Activated naive CD4-positive, alpha-beta T cell treated with anti-CD3 and anti-CD28 coated beads for 36 hours (primary cell): ENCODE measurements at regions of chr19 and their contacts with region 1.

Region 1: DNA sequence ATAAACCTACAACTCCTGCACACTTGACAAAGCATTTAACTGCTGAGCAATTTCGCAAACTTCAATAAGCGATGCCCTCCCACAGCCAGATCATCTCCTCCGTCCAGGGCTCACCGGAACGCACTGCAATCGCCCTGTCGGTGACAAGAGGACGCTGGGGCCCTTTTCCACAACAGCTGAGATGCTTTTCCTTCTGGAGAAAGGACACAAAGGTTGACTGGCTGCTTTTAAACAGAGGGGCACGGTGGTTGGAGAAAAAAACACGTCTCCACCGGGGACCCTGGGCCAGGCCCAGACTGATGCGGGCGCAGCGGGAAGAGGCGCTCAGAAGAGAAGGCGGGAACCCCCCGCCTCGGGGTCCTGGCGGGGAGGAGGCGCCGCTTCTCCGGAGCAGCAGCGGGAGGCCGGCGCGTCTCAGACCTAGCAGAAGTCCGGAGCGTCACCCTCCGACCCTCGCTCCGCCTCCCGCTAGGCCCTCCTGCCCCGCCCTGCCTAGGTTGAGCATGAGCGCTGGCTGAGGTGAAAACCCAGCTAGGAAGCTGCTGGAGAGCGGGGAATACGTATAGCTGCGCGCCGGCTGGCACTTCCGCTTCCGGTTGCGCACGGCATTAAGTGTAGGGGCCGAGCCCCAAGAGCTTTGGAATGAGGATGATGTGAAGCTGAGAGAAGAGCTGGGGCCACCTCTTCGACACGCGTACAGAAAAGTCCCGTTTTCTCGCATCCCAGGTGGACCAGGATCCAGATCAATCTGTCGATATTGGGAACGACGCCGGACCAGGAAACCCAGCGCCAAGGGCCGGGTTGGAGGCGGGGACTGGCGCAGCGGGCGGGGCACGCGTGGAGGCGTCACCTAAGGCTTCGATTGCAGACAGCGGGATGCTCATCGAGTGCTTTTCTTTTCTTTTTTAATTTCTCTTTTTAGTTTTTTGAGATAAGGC is at the start of gene ZNF846:
- DNase-seq: peak; percentile 96
- H3K4me3 Mint-ChIP-seq: peak within 1 kb of the TSS; percentile 98
- H3K27ac Mint-ChIP-seq: peak within 1 kb of the TSS; percentile 98
- H3K4me1 Mint-ChIP-seq: peaks cover 5% of the 10 kb centered on the region
- H3K27me3 Mint-ChIP-seq: no peaks in the 10 kb centered on the region
- total RNA-seq, gene ZNF846: 2.0 to 3.5 TPM

Region 2: GRCh38 chr19:9621156-9622037 is 147.0 kb before region 1 on chr19 and contains the start of gene ZNF561:
- CTCF ChIA-PET with region 1: interaction called, 3 read pairs
- intact Hi-C with region 1: loop called (anchors 1 kb)
- DNase-seq: peak; percentile 90
- H3K4me3 Mint-ChIP-seq: peak within 1 kb of the TSS; percentile 98
- H3K27ac Mint-ChIP-seq: peak within 1 kb of the TSS; percentile 99
- H3K4me1 Mint-ChIP-seq: peaks cover 18% of the 10 kb centered on the region
- H3K27me3 Mint-ChIP-seq: no peaks in the 10 kb centered on the region
- total RNA-seq, gene ZNF561: 28.7 to 29.4 TPM

Region 3: DNA sequence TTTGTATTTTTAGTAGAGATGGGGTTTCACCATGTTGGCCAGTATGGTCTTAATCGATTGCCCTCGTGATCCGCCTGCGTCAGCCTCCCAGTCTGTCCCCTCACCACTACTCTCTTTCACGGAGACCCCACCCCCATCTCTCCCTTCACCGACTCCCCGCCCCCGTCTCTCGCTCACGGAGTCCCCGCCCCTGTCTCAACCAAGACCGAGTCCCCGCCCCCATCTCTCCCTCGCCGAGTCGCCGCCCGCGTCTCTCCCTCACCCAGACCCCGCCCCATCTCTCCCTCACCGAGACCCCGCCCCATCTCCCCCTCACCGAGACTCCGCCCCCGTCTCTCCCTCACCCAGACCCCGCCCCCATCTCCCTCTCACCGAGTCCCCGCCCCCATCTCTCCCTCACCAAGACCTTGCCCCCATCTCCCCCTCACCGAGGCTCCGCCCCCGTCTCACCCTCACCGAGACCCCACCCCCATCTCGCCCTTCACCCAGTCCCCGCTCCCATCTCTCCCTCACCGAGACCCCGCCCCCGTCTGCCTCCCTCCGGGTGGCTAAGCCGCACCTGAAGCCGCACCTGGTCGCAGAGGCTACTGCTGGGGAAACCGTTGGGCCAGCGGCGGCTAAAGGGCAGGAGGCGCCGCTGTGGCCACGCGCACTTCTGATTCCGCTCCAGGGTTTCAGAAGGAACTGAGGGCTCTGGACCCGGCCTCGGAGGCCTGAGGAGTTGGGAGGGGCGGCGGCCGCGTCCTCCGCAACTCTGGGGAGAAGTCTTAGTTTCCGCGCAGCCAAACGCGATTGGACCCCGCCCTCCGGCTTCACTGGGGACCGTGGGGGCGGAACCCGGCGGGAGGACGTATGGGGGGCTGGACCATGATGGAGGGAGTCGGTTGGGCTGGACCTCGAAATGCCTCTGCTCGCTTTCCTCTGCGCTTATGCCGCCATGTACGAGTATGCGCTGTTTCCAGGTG is 17.2 kb after region 1 on chr19:
- CTCF ChIA-PET with region 1: no interaction called
- intact Hi-C with region 1: loop called (anchors 1 kb)
- DNase-seq: peak; percentile 100
- H3K4me3 Mint-ChIP-seq: peak overlapping the region; percentile 93
- H3K27ac Mint-ChIP-seq: peak overlapping the region; percentile 94
- H3K4me1 Mint-ChIP-seq: peaks cover 25% of the 10 kb centered on the region
- H3K27me3 Mint-ChIP-seq: no peaks in the 10 kb centered on the region

Region 4: GRCh38 chr19:9808855-9809824 is 40.7 kb after region 1 on chr19:
- CTCF ChIA-PET with region 1: no interaction called
- intact Hi-C with region 1: no loop called
- DNase-seq: no peak
- H3K4me3 Mint-ChIP-seq: no peak overlapping the region
- H3K27ac Mint-ChIP-seq: peak overlapping the region; percentile 60
- H3K4me1 Mint-ChIP-seq: peaks cover 22% of the 10 kb centered on the region
- H3K27me3 Mint-ChIP-seq: no peaks in the 10 kb centered on the region

Region 5: DNA sequence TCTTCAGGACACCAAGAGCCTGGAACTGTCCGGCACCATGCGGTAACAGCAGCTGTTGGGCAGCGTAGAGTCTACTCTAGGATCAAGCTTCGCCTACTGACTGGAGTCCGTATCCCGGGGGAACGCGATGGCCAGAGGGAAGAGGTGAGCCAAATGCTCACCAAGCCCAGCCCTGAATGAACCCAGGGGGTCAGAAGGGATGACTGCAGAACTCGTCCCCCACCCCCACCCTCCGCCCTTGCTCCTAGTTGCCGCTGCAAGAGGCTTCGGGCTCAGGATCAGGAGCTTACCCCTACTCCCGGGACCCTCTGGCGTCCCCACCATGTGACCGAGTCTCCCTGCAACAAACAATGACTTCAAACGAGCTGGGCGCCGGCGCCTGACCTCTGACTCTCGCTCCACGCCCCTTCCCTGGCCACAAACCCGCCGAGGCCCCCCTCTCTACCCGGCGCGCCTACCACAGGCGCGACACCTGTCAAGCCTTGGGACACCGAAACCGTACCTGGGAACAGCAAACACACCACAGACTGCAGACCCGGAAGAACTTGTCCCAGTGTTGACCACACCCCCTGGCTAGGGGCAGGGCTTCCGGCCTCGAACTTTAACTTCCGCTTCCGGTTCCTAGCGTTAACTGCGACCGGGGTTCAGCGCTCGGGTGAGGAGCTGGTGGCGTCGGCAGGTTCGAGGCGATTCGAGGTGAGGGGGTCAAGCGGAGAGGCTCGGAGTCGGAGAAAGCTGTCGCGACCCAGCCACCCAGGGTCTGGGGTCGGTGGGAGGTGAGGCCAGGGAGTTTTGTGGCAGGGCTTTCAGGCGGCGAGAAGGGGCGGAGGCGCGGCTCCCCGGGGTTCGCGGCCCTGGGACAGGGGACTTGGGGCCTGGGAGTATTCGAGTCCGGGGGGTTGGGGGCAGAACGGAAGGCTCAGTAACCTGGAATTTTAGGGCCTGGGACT is 59.1 kb after region 1 on chr19 and contains the start of gene UBL5:
- CTCF ChIA-PET with region 1: no interaction called
- intact Hi-C with region 1: loop called (anchors 1 kb)
- DNase-seq: peak; percentile 93
- H3K4me3 Mint-ChIP-seq: peak within 1 kb of the TSS; percentile 100
- H3K27ac Mint-ChIP-seq: peak within 1 kb of the TSS; percentile 90
- H3K4me1 Mint-ChIP-seq: peaks cover 26% of the 10 kb centered on the region
- H3K27me3 Mint-ChIP-seq: no peaks in the 10 kb centered on the region
- total RNA-seq, gene UBL5: 287 to 298 TPM

Region 6: DNA sequence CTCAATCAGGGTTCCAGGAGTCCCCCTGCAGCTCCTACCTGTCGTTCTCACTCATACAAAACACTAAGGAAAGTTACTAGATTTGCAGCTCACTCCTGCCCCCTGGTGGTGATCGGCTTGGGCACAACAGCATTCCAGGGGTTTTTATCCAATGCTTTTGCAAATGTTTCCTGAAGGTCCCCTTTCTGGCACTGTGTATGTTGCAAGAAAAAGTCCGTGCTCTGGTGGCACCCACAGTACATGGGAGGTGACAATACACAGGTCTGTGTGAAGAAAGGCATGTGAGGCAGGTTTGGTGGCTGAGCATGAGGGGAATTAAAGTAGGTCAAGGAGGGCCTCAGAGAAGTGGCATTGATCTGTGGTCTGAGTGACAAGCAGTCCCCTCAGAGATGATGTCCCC is 620.5 kb after region 1 on chr19:
- CTCF ChIA-PET with region 1: no interaction called
- intact Hi-C with region 1: no loop called
- DNase-seq: peak; percentile 91
- H3K4me3 Mint-ChIP-seq: no peak overlapping the region
- H3K27ac Mint-ChIP-seq: no peak overlapping the region
- H3K4me1 Mint-ChIP-seq: no peaks in the 10 kb centered on the region
- H3K27me3 Mint-ChIP-seq: no peaks in the 10 kb centered on the region